Dendritic cell treated with granulocyte-macrophage colony-stimulating factor and Interleukin-4, amounts not matched to agents 40 ng/mL and 50 ng/mL, for 4 days (primary cell): ENCODE measurements at regions of chr5 and their contacts with region 1.

Region 1: DNA sequence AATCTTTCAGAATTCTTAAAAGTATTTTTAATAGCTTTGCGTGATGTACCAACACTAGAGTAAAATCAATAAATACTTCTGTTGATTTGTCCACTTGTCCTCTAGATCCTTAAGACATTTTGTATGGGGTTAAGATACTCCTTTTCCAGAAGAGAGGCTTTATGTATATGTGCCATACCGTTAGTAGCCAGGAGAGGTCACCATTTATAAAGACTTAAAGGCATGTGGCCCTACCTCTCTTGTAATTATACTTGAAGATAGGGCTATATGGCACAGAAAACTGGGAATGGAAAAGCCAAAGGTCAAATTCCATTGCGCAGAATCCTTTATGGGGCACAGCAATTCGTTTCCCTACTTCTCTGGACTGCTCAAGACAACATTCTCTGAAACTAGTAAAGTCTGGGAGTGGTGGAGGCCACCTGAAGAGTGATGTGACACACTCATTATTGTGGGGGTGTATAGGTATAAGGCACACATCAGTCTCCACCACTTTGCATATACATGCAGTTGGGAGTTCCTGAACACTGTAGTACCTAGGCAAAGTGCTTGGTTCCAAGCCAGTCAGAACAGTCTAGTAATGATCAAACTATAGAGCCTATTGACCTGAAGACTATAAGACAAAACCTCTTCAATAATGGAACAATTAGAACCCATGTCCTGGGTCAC is 140.1 kb upstream of the FBXL17 start:
- H3K4me3 Mint-ChIP-seq: no peak overlapping the region
- H3K27ac Mint-ChIP-seq: no peak overlapping the region
- H3K4me1 Mint-ChIP-seq: peaks cover 8% of the 10 kb centered on the region
- H3K27me3 Mint-ChIP-seq: no peaks in the 10 kb centered on the region

Region 2: GRCh38 chr5:109354761-109355160 is 832.8 kb after region 1 on chr5:
- intact Hi-C with region 1: no loop called
- H3K4me3 Mint-ChIP-seq: no peak overlapping the region
- H3K27ac Mint-ChIP-seq: no peak overlapping the region
- H3K4me1 Mint-ChIP-seq: no peaks in the 10 kb centered on the region
- H3K27me3 Mint-ChIP-seq: no peaks in the 10 kb centered on the region

Region 3: DNA sequence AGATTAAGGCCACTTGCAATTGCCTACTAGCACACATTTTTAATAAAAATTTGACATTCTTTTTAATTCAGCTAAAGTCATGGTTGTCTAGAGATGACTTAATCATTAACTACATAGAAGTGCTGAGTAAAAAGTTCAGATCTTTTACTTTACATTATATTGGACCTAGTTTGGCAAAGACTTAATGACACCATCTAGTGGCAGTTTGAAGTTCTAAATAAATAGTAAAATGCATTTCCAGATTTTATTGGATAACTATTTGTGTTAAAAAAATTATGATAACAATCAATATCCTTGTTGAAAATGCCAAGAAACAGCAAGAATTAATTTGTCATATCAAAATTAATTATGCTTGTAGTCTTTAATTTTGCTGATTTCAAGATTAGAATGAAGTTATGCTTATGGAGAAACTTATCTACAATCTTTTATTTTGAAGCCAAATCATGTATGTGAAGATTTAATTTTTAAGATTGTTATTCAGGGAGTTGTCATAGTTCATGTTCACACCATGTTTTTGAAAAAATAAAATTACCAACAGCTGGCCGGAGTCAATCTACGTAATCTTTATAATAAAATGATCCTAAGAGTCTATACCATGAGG is 957.4 kb after region 1 on chr5:
- intact Hi-C with region 1: loop called (anchors 5 kb)
- H3K4me3 Mint-ChIP-seq: no peak overlapping the region
- H3K27ac Mint-ChIP-seq: no peak overlapping the region
- H3K4me1 Mint-ChIP-seq: peaks cover 22% of the 10 kb centered on the region
- H3K27me3 Mint-ChIP-seq: peaks cover 4% of the 10 kb centered on the region